ENCODE measurements at regions of chr10 and their contacts with region 1.

Region 1: DNA sequence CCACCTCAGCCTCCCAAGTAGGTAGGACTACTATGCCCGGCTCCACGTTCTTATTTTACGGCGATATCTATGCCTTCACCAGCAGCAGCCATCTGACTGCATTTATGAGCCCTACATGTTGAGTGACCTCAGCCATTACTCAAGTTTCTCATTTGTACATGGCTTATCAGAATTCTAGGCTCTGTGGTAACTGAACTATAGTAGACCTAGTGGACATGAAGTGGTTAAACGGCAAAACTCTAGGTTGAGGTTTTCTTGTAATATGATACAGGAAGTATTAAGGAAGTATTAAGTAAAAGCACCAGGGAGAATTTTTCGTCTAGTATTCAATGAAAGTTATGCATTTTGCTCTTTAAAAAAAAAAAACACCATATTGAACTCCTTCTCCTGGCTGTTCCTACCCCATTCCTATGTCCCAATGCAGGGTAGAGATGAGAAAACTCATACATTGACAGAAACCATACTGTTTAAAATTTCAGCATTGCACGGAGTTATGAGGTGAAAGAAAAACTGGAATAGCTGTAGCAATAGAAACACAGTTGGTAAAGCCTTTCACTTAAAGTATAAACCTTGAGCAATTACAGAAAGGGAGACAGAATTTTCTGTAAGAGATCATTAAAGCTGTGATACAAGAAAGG is 39.8 kb upstream of the EPC1 start:
- DNase-seq: no peak
- H3K4me3 ChIP-seq: no peak overlapping the region
- H3K4me3 Mint-ChIP-seq: no peak overlapping the region
- H3K27ac Mint-ChIP-seq: no peak overlapping the region
- H3K4me1 ChIP-seq: no peaks in the 10 kb centered on the region
- H3K4me1 Mint-ChIP-seq: no peaks in the 10 kb centered on the region
- H3K27me3 ChIP-seq: no peaks in the 10 kb centered on the region
- H3K27me3 Mint-ChIP-seq: peaks cover 4% of the 10 kb centered on the region
- CTCF ChIP-seq: no peak

Region 2: GRCh38 chr10:31947144-31947926 is 439.4 kb before region 1 on chr10:
- CTCF ChIA-PET with region 1: no interaction called
- POLR2A ChIA-PET with region 1: interaction called, 11 read pairs
- intact Hi-C with region 1: no loop called
- DNase-seq: peak; percentile 74 to 84
- H3K4me3 ChIP-seq: peak overlapping the region; percentile 10
- H3K4me3 Mint-ChIP-seq: peak overlapping the region; percentile 65
- H3K27ac Mint-ChIP-seq: peak overlapping the region; percentile 70
- H3K4me1 ChIP-seq: peaks cover 42% of the 10 kb centered on the region
- H3K4me1 Mint-ChIP-seq: peaks cover 26% of the 10 kb centered on the region
- H3K27me3 ChIP-seq: no peaks in the 10 kb centered on the region
- H3K27me3 Mint-ChIP-seq: no peaks in the 10 kb centered on the region
- CTCF ChIP-seq: peak; percentile 47 to 82